ENCODE measurements at regions of chr17 and their contacts with region 1.

Region 1: DNA sequence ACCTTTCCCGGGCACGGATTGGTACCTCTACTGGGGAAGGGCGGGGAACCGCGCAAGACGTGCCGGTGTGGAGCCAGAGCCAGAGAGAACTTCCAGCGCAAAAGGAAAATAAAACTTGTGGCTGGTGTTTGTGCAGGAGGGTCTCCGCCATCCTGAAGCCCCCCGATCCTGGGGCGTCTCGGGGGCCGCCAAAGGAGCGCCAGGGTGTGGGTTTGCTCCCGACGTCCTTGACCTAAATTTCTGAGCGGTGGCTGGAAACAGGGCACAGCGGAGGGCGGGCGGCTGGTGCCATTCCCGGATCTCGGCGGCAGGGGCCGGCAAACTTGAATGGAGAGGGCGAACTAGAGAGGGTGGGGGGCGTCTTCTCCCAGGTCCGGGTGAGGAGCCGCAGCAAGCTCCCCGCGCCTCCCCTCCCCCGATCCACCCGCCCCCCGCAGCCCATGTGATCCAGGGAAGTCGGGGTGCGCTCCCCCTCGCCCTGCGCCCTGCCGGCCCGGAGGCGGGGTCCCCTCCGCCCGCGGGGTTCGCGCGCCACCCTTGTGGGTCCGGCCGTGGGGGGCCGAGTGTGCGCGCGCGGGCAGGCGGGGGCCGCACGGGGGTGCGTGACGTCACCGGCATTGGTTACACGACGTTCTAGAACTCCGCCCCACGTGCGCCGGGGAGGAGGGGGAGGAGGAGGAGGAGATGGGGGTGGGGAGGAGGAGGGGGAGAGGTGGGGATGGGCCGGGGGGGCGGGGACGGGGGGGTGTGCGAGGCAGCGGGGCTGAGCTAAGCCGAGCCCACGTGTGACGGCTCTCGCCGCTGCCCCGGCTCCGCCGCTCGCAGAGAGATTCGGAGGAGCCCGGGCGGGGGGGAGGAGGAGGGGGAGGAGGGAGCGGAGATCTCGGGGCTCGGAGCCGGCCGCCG is at the start of gene MSI2:
- DNase-seq: peak; percentile 88 to 95 (median 89)
- H3K4me3 ChIP-seq: peak within 1 kb of the TSS; percentile 62 to 72
- H3K4me3 Mint-ChIP-seq: peak within 1 kb of the TSS; percentile 87 to 97 (median 94)
- H3K27ac ChIP-seq: peak within 1 kb of the TSS; percentile 77
- H3K27ac Mint-ChIP-seq: peak within 1 kb of the TSS; percentile 88 to 99 (median 94)
- H3K4me1 ChIP-seq: peaks cover 38% of the 10 kb centered on the region
- H3K4me1 Mint-ChIP-seq: peaks cover 34 to 62% (median 42%) of the 10 kb centered on the region in 4 donors
- H3K27me3 ChIP-seq: no peaks in the 10 kb centered on the region
- H3K27me3 Mint-ChIP-seq: no peaks in the 10 kb centered on the region
- total RNA-seq, gene MSI2: 107 to 110 TPM

Region 2: DNA sequence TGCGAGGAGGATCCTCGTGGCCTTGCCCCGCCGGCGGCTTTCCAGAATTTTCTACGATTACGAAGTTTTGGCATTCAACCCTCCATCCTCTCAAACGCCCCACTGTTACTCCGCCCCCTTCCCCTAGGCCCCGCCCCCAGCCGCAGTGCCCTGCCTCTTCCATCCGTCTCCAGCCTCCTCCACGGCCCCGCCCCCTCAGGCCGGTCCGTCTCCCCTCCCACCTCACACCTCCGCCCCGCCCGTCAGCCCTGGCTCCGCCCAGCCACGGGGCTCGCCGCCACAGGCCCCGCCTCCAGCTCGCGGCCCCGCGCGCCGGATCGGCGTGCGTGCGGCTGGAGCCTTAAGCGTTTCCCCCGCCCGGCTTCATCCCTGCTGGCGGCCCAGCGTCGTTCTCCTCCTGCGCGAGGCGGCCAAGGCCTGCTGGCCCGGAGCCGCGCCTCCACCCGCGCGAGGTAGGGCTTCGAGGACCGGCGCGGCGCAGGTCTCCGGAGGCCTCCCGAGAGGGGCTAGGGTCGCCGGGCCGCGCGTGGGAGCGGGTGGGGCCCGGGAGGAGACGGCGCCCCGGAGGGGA is 422.1 kb before region 1 on chr17 and contains the starts of genes C17orf67 and DGKE:
- CTCF ChIA-PET with region 1: no interaction called
- POLR2A ChIA-PET with region 1: no interaction called
- intact Hi-C with region 1: loop called (anchors 5 kb)
- DNase-seq: peak; percentile 98 to 99 (median 98)
- H3K4me3 ChIP-seq: peak within 1 kb of the TSS; percentile 49 to 88
- H3K4me3 Mint-ChIP-seq: peak within 1 kb of the TSS; percentile 95 to 98 (median 96)
- H3K27ac ChIP-seq: peak within 1 kb of the TSS; percentile 79
- H3K27ac Mint-ChIP-seq: peak within 1 kb of the TSS; percentile 92 to 97 (median 95)
- H3K4me1 ChIP-seq: peaks cover 67% of the 10 kb centered on the region
- H3K4me1 Mint-ChIP-seq: peaks cover 43 to 75% (median 57%) of the 10 kb centered on the region in 4 donors
- H3K27me3 ChIP-seq: no peaks in the 10 kb centered on the region
- H3K27me3 Mint-ChIP-seq: no peaks in the 10 kb centered on the region
- total RNA-seq, gene C17orf67: 9.5 to 11.2 TPM
- total RNA-seq, gene DGKE: 36.7 to 37.7 TPM

Region 3: DNA sequence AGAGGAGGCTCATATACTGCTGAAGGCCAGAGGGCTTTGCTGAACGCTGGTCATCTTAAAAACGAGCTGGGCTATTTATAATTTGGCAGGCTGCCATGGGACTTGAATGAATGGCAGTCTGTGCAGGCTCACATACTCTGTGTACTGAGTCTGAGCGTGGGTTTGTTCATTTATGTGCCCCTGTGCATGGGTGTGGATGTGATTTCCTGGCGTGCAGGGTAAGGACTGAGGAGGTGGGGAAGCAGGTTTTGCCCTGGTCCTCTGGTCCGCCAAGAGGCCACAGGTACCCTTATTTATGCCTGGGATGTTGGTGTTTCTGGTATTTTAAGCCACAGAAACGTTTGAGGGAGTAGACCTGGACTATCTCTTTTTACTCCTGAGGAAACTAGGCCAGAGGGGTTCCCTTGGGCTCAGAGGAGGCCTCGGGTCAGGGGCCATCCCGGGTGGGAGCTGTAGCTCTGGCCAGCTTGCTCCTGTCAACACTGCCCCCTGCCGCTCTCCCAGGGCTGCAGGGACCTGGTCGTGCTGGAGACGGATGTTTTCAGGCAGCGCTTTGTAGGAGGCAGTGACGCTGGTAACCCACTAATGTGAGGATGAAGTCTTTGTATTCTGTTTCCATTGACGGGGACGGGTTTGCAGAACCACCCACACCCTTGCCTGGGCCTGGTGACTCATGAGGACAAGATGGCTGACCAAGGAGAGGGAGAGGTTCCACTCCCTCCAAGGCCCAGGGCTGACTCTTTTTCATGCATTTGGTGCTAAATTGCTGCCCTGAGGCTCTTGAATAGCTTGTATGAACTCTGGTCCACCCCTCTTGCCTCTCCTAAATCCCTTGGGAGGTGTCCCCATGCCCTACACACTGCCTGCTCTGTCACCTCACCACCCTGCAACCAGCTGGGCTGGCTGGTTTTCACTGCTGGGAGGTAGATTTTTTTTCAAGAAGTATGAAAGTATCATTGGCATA is 184.8 kb after region 1 on chr17:
- CTCF ChIA-PET with region 1: interaction called, 3 read pairs
- POLR2A ChIA-PET with region 1: interaction called, 4 read pairs
- intact Hi-C with region 1: loop called (anchors 5 kb)
- DNase-seq: peak; percentile 54 to 87 (median 67)
- H3K4me3 ChIP-seq: peak overlapping the region in 1 of 2 donors; percentile 5
- H3K4me3 Mint-ChIP-seq: peak overlapping the region in 7 of 8 donors; percentile 8 to 73 (median 53)
- H3K27ac ChIP-seq: peak overlapping the region; percentile 29
- H3K27ac Mint-ChIP-seq: peak overlapping the region; percentile 65 to 94 (median 82)
- H3K4me1 ChIP-seq: peaks cover 50% of the 10 kb centered on the region
- H3K4me1 Mint-ChIP-seq: peaks cover 50 to 81% (median 60%) of the 10 kb centered on the region in 4 donors
- H3K27me3 ChIP-seq: no peaks in the 10 kb centered on the region
- H3K27me3 Mint-ChIP-seq: no peaks in the 10 kb centered on the region

Region 4: GRCh38 chr17:57604771-57605674 is 349.0 kb after region 1 on chr17:
- CTCF ChIA-PET with region 1: no interaction called
- POLR2A ChIA-PET with region 1: interaction called, 4 read pairs
- intact Hi-C with region 1: loop called (anchors 5 kb)
- DNase-seq: peak in 2 of 5 donors; percentile 6 to 64
- H3K4me3 ChIP-seq: peak overlapping the region in 1 of 2 donors; percentile 3
- H3K4me3 Mint-ChIP-seq: peak overlapping the region in 7 of 8 donors; percentile 72 to 86 (median 81)
- H3K27ac ChIP-seq: peak overlapping the region; percentile 69
- H3K27ac Mint-ChIP-seq: peak overlapping the region; percentile 86 to 99 (median 97)
- H3K4me1 ChIP-seq: peaks cover 87% of the 10 kb centered on the region
- H3K4me1 Mint-ChIP-seq: peaks cover 53 to 77% (median 67%) of the 10 kb centered on the region in 4 donors
- H3K27me3 ChIP-seq: no peaks in the 10 kb centered on the region
- H3K27me3 Mint-ChIP-seq: no peaks in the 10 kb centered on the region

Region 5: GRCh38 chr17:57747221-57748017 is 491.4 kb after region 1 on chr17:
- CTCF ChIA-PET with region 1: interaction called, 7 read pairs
- POLR2A ChIA-PET with region 1: no interaction called
- intact Hi-C with region 1: loop called (anchors 5 kb)
- DNase-seq: peak; percentile 45 to 57 (median 49)
- H3K4me3 ChIP-seq: no peak overlapping the region
- H3K4me3 Mint-ChIP-seq: no peak overlapping the region
- H3K27ac ChIP-seq: no peak overlapping the region
- H3K27ac Mint-ChIP-seq: peak overlapping the region in 1 of 7 donors; percentile 37
- H3K4me1 ChIP-seq: no peaks in the 10 kb centered on the region
- H3K4me1 Mint-ChIP-seq: peaks cover 0 to 1% (median 0%) of the 10 kb centered on the region in 4 donors
- H3K27me3 ChIP-seq: no peaks in the 10 kb centered on the region
- H3K27me3 Mint-ChIP-seq: peaks cover 3 to 9% of the 10 kb centered on the region in 2 donors

Region 6: DNA sequence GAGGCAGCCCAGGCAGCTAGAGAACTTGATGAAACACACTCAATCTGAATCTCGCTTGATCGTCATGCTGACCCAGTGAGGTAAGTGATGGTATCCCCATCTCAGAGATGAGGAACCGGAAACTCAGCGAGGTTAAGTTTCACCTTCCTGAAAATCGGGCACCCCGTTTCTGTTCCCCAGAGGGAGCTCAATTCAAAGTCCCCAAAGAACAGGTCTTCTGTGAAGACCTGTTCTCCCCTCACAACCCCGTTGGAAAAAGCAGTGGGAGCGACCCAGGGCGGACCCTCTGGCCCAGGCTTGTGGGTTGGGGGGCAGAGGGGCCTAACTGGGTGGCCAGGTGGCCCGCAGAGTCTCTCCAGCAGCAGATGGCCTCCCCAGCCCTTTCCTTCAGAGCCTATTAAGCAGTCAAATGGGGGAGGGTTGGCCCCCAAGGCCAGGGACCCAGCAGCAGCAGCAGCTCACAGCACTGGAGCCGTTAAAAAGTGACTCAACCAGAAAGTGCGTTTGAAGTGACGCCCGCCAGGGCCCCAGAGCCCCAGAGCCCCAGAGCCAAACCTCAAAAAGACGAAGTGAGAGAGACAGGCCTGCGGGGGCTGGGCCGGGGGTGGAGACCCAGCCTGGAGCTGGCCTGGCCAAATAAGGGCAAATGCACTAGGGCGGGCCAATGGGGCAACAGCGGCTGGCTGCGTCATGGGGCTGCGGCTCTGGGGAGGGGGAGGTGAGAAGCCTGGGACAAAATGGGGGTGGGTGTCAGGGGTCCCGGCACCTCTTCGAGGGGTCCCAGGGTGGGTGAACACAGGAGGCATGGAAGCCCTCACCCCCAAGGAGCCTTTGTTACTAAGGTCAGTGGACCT is 1081.8 kb after region 1 on chr17:
- CTCF ChIA-PET with region 1: no interaction called
- POLR2A ChIA-PET with region 1: no interaction called
- intact Hi-C with region 1: loop called (anchors 10 kb)
- DNase-seq: peak; percentile 89 to 96 (median 91)
- H3K4me3 ChIP-seq: peak overlapping the region; percentile 99
- H3K4me3 Mint-ChIP-seq: peak overlapping the region; percentile 88 to 99 (median 98)
- H3K27ac ChIP-seq: peak overlapping the region; percentile 97
- H3K27ac Mint-ChIP-seq: peak overlapping the region; percentile 94 to 99 (median 97)
- H3K4me1 ChIP-seq: peaks cover 89% of the 10 kb centered on the region
- H3K4me1 Mint-ChIP-seq: peaks cover 41 to 98% (median 64%) of the 10 kb centered on the region in 4 donors
- H3K27me3 ChIP-seq: no peaks in the 10 kb centered on the region
- H3K27me3 Mint-ChIP-seq: no peaks in the 10 kb centered on the region

Region 7: DNA sequence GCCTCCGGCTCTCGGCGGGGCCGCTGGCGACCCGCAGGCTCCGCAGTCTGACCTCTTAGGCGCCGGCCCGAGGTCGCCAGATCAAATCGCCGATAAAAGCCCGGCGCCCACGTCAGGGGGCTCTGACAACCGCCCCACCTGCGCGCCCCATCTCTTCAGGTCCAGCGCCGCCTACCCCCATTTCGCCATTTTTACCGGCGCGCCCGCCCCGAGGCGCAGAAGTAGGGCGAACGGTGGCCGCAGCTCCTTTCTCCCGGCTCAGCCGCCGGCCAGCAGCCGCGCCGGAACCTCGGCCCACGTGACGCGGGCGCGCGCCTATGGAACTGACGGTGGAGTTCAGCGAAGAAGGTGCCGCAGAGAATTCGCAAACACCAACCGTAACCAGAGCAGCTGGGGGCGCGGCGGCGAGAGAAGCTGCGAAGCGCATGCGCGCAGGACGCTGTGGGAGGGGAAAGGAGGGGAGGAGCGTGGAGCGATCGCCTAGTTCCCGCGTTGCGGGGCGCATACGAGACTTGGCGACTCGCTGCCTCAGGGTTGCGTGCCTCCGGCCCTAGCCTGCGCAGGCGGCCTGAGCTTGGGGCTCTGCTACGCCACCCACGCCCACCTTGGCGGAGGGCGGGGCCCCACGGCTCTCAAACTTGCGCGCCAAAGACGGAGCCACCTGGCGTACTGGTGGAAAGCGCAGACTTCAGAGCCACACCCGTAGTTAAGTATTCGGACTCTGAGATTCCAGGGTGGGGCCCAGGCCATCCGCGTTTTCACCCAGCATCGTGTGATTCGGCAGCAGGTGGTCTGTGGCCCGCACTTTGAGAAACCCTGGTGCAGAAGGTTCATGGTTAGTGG is 1850.7 kb after region 1 on chr17 and contains the start of gene TRIM37:
- CTCF ChIA-PET with region 1: no interaction called
- POLR2A ChIA-PET with region 1: no interaction called
- intact Hi-C with region 1: loop called (anchors 5 kb)
- DNase-seq: peak; percentile 99 to 100 (median 99)
- H3K4me3 ChIP-seq: peak within 1 kb of the TSS; percentile 67 to 71
- H3K4me3 Mint-ChIP-seq: peak within 1 kb of the TSS; percentile 90 to 96 (median 92)
- H3K27ac ChIP-seq: peak within 1 kb of the TSS; percentile 81
- H3K27ac Mint-ChIP-seq: peak within 1 kb of the TSS; percentile 90 to 97 (median 95)
- H3K4me1 ChIP-seq: peaks cover 29% of the 10 kb centered on the region
- H3K4me1 Mint-ChIP-seq: peaks cover 25 to 47% (median 37%) of the 10 kb centered on the region in 4 donors
- H3K27me3 ChIP-seq: no peaks in the 10 kb centered on the region
- H3K27me3 Mint-ChIP-seq: no peaks in the 10 kb centered on the region
- total RNA-seq, gene TRIM37: 20.7 to 25.0 TPM